OCI-LY7 (cell line): ENCODE measurements at regions of chr2 and their contacts with region 1.

Region 1: GRCh38 chr2:127067620-127068350 is 39.2 kb downstream of the BIN1 start:
- DNase-seq: peak; percentile 58
- H3K4me3 ChIP-seq: no peak overlapping the region
- H3K27ac ChIP-seq: no peak overlapping the region
- H3K4me1 ChIP-seq: no peaks in the 10 kb centered on the region
- CTCF ChIP-seq: peak; percentile 79

Region 2: GRCh38 chr2:127158614-127159290 is 91.0 kb after region 1 on chr2:
- CTCF ChIA-PET with region 1: interaction called, 3 read pairs
- POLR2A ChIA-PET with region 1: interaction called, 10 read pairs
- intact Hi-C with region 1: no loop called
- DNase-seq: peak; percentile 12
- H3K4me3 ChIP-seq: no peak overlapping the region
- H3K27ac ChIP-seq: no peak overlapping the region
- H3K4me1 ChIP-seq: no peaks in the 10 kb centered on the region
- CTCF ChIP-seq: no peak

Region 3: DNA sequence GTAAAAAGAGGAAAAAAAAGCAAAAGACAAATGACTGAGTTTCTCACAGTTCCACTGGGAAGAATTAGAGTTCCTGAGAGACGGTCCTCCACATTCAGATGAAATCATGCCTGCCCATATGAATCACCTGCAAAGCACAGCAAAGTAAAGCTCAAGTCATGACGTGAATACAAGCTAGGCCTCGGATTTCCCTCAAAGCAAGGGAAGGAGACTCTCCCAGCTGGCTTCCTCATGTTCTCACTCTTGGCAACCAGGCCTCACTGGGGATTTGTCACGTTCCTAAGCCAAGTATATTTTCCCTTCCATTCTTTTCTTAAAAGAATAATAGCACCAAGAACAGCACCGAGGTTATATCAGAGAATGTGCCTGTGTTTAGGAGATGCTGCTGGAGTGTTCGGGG is 105.3 kb after region 1 on chr2:
- CTCF ChIA-PET with region 1: no interaction called
- POLR2A ChIA-PET with region 1: no interaction called
- intact Hi-C with region 1: loop called (anchors 2 kb)
- DNase-seq: no peak
- H3K4me3 ChIP-seq: no peak overlapping the region
- H3K27ac ChIP-seq: no peak overlapping the region
- H3K4me1 ChIP-seq: no peaks in the 10 kb centered on the region
- CTCF ChIP-seq: no peak